Esophagus muscularis mucosa (tissue), 4 donors: ENCODE measurements at regions of chr17 and their contacts with region 1.

Region 1: GRCh38 chr17:76353599-76354316 is at the start of gene PRPSAP1:
- DNase-seq: peak; percentile 95
- H3K4me3 ChIP-seq: peak within 1 kb of the TSS; percentile 94 to 99 (median 98)
- H3K27ac ChIP-seq: peak within 1 kb of the TSS; percentile 86 to 93 (median 90)
- H3K4me1 ChIP-seq: peaks cover 17 to 30% (median 29%) of the 10 kb centered on the region in 4 donors
- H3K27me3 ChIP-seq: no peaks in the 10 kb centered on the region
- CTCF ChIP-seq: peak; percentile 45 to 56 (median 53)
- EP300 ChIP-seq: no peak
- POLR2A ChIP-seq: peak; percentile 64
- total RNA-seq, gene PRPSAP1: 37.3 to 71.4 (median 50.4) TPM

Region 2: GRCh38 chr17:76232342-76232741 is 121.4 kb before region 1 on chr17:
- intact Hi-C with region 1: no loop called
- DNase-seq: no peak
- H3K4me3 ChIP-seq: no peak overlapping the region
- H3K27ac ChIP-seq: no peak overlapping the region
- H3K4me1 ChIP-seq: no peaks in the 10 kb centered on the region
- H3K27me3 ChIP-seq: no peaks in the 10 kb centered on the region
- CTCF ChIP-seq: no peak
- EP300 ChIP-seq: no peak
- POLR2A ChIP-seq: no peak

Region 3: DNA sequence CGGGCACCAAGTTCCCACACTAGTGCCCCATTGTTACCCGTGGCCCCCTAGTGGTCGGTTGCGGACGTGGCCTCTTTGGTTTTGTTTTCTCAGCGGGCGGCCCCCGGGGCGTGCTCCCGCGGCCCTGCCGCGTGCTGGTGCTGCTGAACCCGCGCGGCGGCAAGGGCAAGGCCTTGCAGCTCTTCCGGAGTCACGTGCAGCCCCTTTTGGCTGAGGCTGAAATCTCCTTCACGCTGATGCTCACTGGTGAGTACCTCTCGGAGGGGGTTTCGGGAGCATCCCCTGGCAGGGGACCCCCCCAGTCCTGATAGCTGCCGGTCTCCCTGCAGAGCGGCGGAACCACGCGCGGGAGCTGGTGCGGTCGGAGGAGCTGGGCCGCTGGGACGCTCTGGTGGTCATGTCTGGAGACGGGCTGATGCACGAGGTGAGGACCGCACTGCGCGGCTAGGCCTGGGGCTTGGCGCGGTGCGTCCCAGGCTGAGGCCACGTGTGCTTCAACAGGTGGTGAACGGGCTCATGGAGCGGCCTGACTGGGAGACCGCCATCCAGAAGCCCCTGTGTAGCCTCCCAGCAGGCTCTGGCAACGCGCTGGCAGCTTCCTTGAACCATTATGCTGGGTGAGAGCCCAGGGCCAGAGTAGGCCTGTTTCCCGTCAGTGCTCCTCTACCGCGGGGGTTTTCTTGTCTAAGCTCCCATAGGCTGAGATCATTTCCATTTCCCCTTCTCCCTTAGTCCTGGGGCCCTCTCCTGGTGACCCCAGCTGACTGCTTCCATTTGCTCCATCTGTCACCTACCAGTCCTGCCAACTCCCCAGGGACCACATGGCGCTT is 32.3 kb after region 1 on chr17:
- intact Hi-C with region 1: loop called (anchors 5 kb)
- DNase-seq: peak; percentile 95
- H3K4me3 ChIP-seq: peak overlapping the region; percentile 64 to 73 (median 68)
- H3K27ac ChIP-seq: peak overlapping the region; percentile 79 to 91 (median 84)
- H3K4me1 ChIP-seq: peaks cover 32 to 63% (median 56%) of the 10 kb centered on the region in 4 donors
- H3K27me3 ChIP-seq: peaks cover 0 to 43% (median 4%) of the 10 kb centered on the region in 4 donors
- CTCF ChIP-seq: peak; percentile 74 to 96 (median 82)
- EP300 ChIP-seq: no peak
- POLR2A ChIP-seq: no peak

Region 4: DNA sequence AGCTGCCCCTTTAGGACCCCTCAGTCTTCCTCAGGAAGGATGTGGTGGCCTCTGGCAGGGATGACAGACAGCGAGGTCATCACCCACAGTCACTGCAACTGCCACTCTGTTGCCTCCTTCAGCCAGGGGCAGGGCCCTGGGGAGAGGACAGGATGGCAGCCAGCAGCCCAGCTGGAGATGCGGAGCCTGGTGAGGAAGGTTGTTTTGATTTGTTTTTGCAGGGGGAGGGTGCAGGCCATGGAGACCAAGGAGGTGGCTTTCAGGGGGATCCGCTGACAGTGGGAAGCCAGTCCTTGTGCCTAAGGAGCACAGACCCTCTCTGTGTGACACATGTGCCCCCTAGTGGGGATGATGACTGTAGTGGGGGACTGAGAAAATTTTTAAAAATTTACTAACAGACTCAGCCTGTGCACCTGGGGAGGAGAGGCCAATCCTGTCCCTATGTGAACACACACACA is 193.5 kb after region 1 on chr17:
- intact Hi-C with region 1: no loop called
- DNase-seq: no peak
- H3K4me3 ChIP-seq: no peak overlapping the region
- H3K27ac ChIP-seq: no peak overlapping the region
- H3K4me1 ChIP-seq: peaks cover 35 to 49% (median 48%) of the 10 kb centered on the region in 4 donors
- H3K27me3 ChIP-seq: peaks cover 0 to 14% (median 0%) of the 10 kb centered on the region in 4 donors
- CTCF ChIP-seq: peak; percentile 63 to 69 (median 63)
- EP300 ChIP-seq: no peak
- POLR2A ChIP-seq: no peak